ENCODE measurements at regions of chr5 and their contacts with region 1.

Region 1: GRCh38 chr5:1763548-1763911 is 36.1 kb downstream of the MRPL36 start:
- DNase-seq: no peak
- ATAC-seq: peak; percentile 91
- H3K4me3 ChIP-seq: no peak overlapping the region
- H3K27ac ChIP-seq: no peak overlapping the region
- H3K4me1 ChIP-seq: no peaks in the 10 kb centered on the region
- H3K27me3 ChIP-seq: peaks cover 0 to 3% of the 10 kb centered on the region in 2 experiments; a peak in 2 of 4 replicates
- CTCF ChIP-seq: peak; percentile 69 to 81 (median 79)
- EP300 ChIP-seq: no peak
- POLR2A ChIP-seq: no peak
- RAD21 ChIP-seq: peak; percentile 77

Region 2: DNA sequence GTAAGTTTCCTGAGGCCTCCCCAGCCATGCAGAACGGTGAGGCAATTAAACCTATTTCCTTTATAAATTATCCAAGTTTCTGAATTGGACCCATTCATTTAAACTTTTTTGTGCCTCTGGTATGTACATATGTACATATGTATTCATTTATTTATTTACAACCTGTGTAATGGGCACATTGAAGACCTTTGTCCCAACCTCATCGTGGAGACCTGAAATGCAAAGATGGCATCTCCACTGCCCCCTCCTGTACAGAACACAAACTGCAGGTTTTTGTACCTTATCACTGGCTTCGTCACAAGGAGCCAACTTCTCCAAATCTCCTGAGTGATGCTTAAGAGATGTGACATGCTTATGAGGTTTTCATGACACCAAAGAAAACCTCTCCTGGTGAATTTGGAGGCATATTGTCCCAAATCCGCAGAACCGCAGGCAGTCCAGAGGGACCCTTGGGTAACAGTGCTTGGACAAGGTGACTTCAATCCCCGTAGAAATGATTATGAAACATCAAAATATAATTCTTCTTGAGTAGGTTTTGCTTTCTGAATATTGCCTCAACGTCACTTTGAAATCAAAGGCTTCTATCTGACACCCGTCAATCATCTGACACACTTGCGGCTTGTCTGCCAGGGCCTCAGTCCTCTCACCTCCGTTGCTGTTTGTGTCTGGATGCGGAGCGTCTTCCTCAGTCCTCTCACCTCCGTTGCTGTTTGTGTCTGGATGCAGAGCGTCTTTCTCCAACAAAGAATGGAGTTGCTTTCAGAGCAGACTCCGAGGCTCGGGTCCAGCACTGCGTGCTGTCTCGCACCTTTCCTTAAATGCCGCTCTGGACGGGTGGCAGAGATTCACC is 254.2 kb after region 1 on chr5:
- CTCF ChIA-PET with region 1: interaction called, 5 read pairs
- POLR2A ChIA-PET with region 1: no interaction called
- RAD21 ChIA-PET with region 1: no interaction called
- SMC1A ChIA-PET with region 1: no interaction called
- in situ Hi-C with region 1: no loop called
- intact Hi-C with region 1: loop called (anchors 1 kb)
- DNase-seq: no peak
- ATAC-seq: peak; percentile 55; the same call in 2 of the 3 replicates
- H3K4me3 ChIP-seq: no peak overlapping the region
- H3K27ac ChIP-seq: no peak overlapping the region
- H3K4me1 ChIP-seq: no peaks in the 10 kb centered on the region
- H3K27me3 ChIP-seq: no peaks in the 10 kb centered on the region; a peak in 1 of 4 replicates
- CTCF ChIP-seq: peak; percentile 46 to 54 (median 50)
- EP300 ChIP-seq: no peak
- POLR2A ChIP-seq: no peak
- RAD21 ChIP-seq: peak; percentile 58

Region 3: DNA sequence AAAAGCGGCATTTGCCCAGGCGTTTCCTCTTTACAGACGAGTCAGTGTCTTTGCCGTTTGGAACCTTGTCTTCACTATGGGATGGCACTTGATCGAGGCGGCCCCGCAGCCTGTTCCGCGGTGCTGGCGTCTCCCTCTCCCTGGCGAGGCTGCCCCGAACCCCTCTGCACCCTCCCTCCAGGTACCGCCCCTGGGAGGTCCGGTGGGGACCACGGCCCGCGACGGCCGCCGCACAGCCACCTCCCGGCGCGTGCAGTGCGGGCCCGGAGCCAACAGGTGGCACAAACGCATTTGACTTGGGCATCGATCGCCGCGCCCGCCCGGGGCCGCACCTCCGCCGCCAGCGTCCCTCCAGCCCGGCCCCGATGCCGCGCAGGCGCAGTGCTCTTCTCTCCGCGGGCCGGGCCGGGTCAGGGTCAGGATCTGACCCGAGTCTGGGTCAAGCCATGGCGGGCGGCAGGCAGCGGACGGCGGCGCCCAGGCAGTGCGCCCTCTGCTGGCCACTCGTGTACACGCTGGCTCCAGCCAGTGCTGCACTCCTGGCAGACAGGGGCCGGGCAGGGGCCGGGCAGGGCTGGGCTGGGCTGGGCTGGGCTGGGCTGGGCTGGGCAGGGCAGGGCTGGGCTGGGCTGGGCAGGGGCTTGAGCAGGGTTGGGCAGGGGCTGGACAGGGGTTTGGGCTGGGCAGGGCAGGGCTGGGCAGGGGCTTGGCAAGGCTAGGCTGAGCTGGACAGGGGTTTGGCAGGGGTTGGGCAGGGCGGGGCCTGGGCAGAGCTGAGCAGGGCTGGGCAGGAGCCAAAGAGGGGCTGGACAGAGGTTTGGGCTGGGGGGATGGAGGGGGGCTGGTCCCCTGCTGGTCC is 275.0 kb after region 1 on chr5:
- CTCF ChIA-PET with region 1: interaction called, 18 read pairs
- POLR2A ChIA-PET with region 1: interaction called, 3 read pairs
- RAD21 ChIA-PET with region 1: interaction called, 4 read pairs
- SMC1A ChIA-PET with region 1: interaction called, 5 read pairs
- in situ Hi-C with region 1: no loop called
- intact Hi-C with region 1: loop called (anchors 2 kb)
- DNase-seq: no peak
- ATAC-seq: peak; percentile 100
- H3K4me3 ChIP-seq: peak overlapping the region; percentile 63; the same call in 1 of the 2 replicates
- H3K27ac ChIP-seq: no peak overlapping the region
- H3K4me1 ChIP-seq: no peaks in the 10 kb centered on the region
- H3K27me3 ChIP-seq: no peaks in the 10 kb centered on the region
- CTCF ChIP-seq: peak; percentile 52 to 78 (median 75)
- EP300 ChIP-seq: no peak
- POLR2A ChIP-seq: no peak
- RAD21 ChIP-seq: 0 out of 2 replicates have a peak, but pooled peaks have one; percentile 16

Measured in GM12878 (cell line).